ENCODE measurements at regions of chr12 and their contacts with region 1.

Region 1: GRCh38 chr12:48824112-48824511 is 5.8 kb downstream of the CACNB3 start:
- DNase-seq: no peak
- ATAC-seq: no peak
- H3K4me3 ChIP-seq: no peak overlapping the region
- H3K27ac ChIP-seq: no peak overlapping the region
- H3K4me1 ChIP-seq: 0 out of 3 replicates have a peak, but pooled peaks cover 4% of the 10 kb centered on the region
- CTCF ChIP-seq: no peak
- EP300 ChIP-seq: no peak
- POLR2A ChIP-seq: no peak
- RAD21 ChIP-seq: no peak

Region 2: DNA sequence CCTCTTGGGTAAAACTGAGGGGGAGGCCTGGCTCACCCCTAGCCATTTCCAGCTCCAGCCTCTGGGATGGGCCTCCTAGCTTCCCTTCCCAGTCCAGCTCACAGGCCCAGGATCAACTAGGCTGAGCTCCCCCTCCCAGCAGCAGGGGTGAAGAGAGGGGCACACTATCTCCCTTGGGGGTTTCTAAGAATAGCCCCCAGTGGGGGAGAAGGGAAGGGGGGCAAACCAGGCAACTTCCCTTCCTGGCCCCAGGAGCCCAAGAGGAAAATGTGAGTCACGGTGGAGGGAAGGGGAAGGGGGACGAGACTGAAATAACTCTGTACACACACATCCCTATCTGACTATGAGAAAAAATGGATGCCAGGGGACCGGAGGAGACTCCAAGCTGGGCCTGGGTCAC is 44.2 kb before region 1 on chr12:
- CTCF ChIA-PET with region 1: no interaction called
- POLR2A ChIA-PET with region 1: no interaction called
- DNase-seq: no peak
- ATAC-seq: no peak
- H3K4me3 ChIP-seq: no peak overlapping the region
- H3K27ac ChIP-seq: no peak overlapping the region
- H3K4me1 ChIP-seq: no peaks in the 10 kb centered on the region
- CTCF ChIP-seq: no peak
- EP300 ChIP-seq: no peak
- POLR2A ChIP-seq: no peak
- RAD21 ChIP-seq: no peak

Region 3: DNA sequence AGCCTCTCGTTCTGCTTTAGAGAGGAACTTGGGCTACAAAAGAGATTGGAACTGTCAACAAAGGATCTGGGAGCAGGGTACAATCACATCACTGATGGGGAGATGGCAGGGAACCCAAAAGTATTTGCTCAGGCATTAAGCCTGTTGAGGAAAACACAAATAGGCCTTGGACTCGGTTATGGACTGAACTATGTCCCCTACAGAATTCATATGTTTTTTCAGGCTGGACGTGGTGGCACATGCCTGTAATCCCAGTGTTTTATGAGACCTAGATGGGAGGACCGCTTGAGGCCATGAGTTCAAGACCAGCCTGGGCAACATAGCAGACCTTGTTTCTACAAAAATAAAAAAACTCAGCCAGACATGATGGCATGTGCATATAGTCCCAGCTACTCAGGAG is 13.9 kb after region 1 on chr12:
- CTCF ChIA-PET with region 1: interaction called, 230 read pairs
- POLR2A ChIA-PET with region 1: no interaction called
- DNase-seq: no peak
- ATAC-seq: no peak
- H3K4me3 ChIP-seq: no peak overlapping the region
- H3K27ac ChIP-seq: no peak overlapping the region
- H3K4me1 ChIP-seq: no peaks in the 10 kb centered on the region
- CTCF ChIP-seq: no peak
- EP300 ChIP-seq: no peak
- POLR2A ChIP-seq: no peak
- RAD21 ChIP-seq: no peak